A549 (cell line): ENCODE measurements at regions of chr5 and their contacts with region 1.

Region 1: GRCh38 chr5:923281-923873 is 30.7 kb downstream of the TRIP13 start:
- DNase-seq: peak; percentile 80 to 89
- ATAC-seq: peak; percentile 96 to 99
- H3K4me3 ChIP-seq: no peak overlapping the region
- H3K27ac ChIP-seq: peak overlapping the region in 1 of 2 experiments; percentile 65; a peak in 3 of 6 replicates
- H3K4me1 ChIP-seq: peaks cover 13% of the 10 kb centered on the region
- CTCF ChIP-seq: peak; percentile 93
- EP300 ChIP-seq: no peak
- POLR2A ChIP-seq: no peak
- RAD21 ChIP-seq: peak; percentile 95 to 98

Region 2: GRCh38 chr5:912280-913091 is 10.9 kb before region 1 on chr5:
- CTCF ChIA-PET with region 1: interaction called, 33 read pairs
- POLR2A ChIA-PET with region 1: no interaction called
- DNase-seq: peak; percentile 96 to 98
- ATAC-seq: peak; percentile 95 to 96
- H3K4me3 ChIP-seq: 0 out of 3 replicates have a peak overlapping the region, but pooled peaks have one; percentile 2
- H3K27ac ChIP-seq: peak overlapping the region; percentile 60 to 83
- H3K4me1 ChIP-seq: peaks cover 24% of the 10 kb centered on the region
- CTCF ChIP-seq: peak; percentile 47
- EP300 ChIP-seq: peak; percentile 54 to 83; a peak in 3 of 5 replicates
- POLR2A ChIP-seq: no peak
- RAD21 ChIP-seq: peak in 1 of 2 experiments; percentile 27; a peak in 2 of 5 replicates

Region 3: GRCh38 chr5:982377-983237 is 59.2 kb after region 1 on chr5:
- CTCF ChIA-PET with region 1: interaction called, 20 read pairs
- POLR2A ChIA-PET with region 1: no interaction called
- DNase-seq: peak; percentile 38 to 65
- ATAC-seq: peak; percentile 79 to 94
- H3K4me3 ChIP-seq: no peak overlapping the region
- H3K27ac ChIP-seq: peak overlapping the region in 1 of 2 experiments; percentile 51; a peak in 2 of 6 replicates
- H3K4me1 ChIP-seq: no peaks in the 10 kb centered on the region
- CTCF ChIP-seq: peak; percentile 46
- EP300 ChIP-seq: no peak
- POLR2A ChIP-seq: no peak
- RAD21 ChIP-seq: peak; percentile 51 to 52

Region 4: GRCh38 chr5:997001-997474 is 73.7 kb after region 1 on chr5:
- CTCF ChIA-PET with region 1: interaction called, 16 read pairs
- POLR2A ChIA-PET with region 1: no interaction called
- DNase-seq: peak; percentile 36 to 46
- ATAC-seq: peak in 1 of 2 experiments; percentile 77; a peak in 3 of 6 replicates
- H3K4me3 ChIP-seq: no peak overlapping the region
- H3K27ac ChIP-seq: peak overlapping the region in 1 of 2 experiments; percentile 67; a peak in 3 of 6 replicates
- H3K4me1 ChIP-seq: no peaks in the 10 kb centered on the region
- CTCF ChIP-seq: no peak
- EP300 ChIP-seq: no peak
- POLR2A ChIP-seq: no peak
- RAD21 ChIP-seq: no peak

Region 5: DNA sequence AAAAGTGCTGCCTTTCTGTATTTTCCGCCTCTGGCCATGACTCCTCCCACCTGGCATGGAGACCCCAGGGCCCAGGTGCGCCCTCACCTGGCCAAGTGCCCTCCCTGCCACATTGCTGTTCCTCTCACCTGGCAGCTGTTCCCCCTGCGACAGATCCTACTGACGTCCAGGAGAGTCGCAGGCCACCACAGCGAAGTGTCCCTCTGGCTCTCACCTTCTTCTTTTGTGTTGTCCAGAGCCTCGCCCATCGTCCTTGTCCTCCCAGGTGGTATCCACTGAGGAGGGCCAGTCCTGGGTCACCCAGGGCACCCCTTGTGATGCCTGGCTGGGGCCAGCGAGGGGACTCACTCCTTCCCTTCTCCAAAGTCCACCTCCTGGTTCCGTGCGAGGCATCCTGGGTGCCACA is 87.9 kb after region 1 on chr5:
- CTCF ChIA-PET with region 1: interaction called, 82 read pairs
- POLR2A ChIA-PET with region 1: no interaction called
- DNase-seq: peak; percentile 53 to 77
- ATAC-seq: peak; percentile 22 to 56; a peak in 3 of 6 replicates
- H3K4me3 ChIP-seq: no peak overlapping the region
- H3K27ac ChIP-seq: no peak overlapping the region
- H3K4me1 ChIP-seq: peaks cover 24% of the 10 kb centered on the region
- CTCF ChIP-seq: peak; percentile 53
- EP300 ChIP-seq: no peak
- POLR2A ChIP-seq: no peak
- RAD21 ChIP-seq: peak; percentile 26 to 40; a peak in 4 of 5 replicates

Region 6: DNA sequence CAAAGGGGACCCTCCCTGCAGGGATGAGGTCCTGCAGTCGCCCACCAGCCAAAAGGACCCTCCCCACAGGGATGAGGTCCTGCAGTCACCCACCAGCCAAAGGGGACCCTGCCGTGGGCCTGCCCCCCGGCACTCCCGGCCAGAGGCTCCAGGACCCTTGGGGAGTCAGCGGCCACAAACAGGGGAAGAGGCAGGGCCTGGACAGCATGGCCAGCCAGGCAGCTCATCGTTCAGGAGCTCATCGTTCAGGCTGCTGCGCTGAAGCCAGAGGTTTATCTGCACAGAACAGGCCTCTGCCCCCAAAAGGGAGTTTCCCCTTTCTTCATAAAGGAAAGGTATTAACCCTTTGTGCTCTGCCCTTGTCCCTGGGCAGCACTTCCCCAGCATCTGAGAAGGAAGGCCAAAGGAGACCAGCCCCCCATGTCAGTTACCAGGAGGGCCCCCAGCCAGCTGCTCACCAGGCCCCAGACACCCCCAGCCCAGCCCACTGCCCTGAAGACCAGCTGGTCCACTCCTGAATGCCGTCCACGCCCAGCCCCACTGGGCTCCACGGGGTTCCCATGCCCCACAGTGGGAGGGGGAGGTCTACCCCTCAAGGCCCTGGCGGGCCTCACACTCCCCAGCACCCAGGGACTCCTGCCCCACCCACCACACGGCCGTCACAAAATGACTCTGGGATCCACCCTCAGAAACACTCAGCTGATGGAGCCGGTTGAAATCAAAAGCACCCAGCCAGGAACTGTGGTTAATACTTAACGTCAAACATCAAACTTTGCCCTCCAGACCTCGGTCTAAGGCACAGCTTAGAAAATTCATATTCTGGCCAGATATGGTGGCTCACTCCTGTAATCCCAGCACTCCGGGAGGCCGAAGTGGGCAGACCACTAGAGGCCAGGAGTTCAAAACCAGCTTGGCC is 182.2 kb after region 1 on chr5:
- CTCF ChIA-PET with region 1: interaction called, 10 read pairs
- POLR2A ChIA-PET with region 1: no interaction called
- DNase-seq: peak; percentile 71 to 74
- ATAC-seq: peak; percentile 54 to 70
- H3K4me3 ChIP-seq: 0 out of 3 replicates have a peak overlapping the region, but pooled peaks have one; percentile 13
- H3K27ac ChIP-seq: peak overlapping the region; percentile 76 to 87
- H3K4me1 ChIP-seq: peaks cover 62% of the 10 kb centered on the region
- CTCF ChIP-seq: no peak
- EP300 ChIP-seq: no peak
- POLR2A ChIP-seq: no peak
- RAD21 ChIP-seq: no peak

Region 7: GRCh38 chr5:1161833-1162229 is 238.5 kb after region 1 on chr5:
- CTCF ChIA-PET with region 1: interaction called, 70 read pairs
- POLR2A ChIA-PET with region 1: no interaction called
- DNase-seq: no peak
- ATAC-seq: peak in 1 of 2 experiments; percentile 14; a peak in 3 of 6 replicates
- H3K4me3 ChIP-seq: no peak overlapping the region
- H3K27ac ChIP-seq: peak overlapping the region; percentile 28 to 49; a peak in 4 of 6 replicates
- H3K4me1 ChIP-seq: peaks cover 15% of the 10 kb centered on the region; the same call in 2 of the 3 replicates
- CTCF ChIP-seq: no peak
- EP300 ChIP-seq: no peak
- POLR2A ChIP-seq: no peak
- RAD21 ChIP-seq: no peak

Region 8: DNA sequence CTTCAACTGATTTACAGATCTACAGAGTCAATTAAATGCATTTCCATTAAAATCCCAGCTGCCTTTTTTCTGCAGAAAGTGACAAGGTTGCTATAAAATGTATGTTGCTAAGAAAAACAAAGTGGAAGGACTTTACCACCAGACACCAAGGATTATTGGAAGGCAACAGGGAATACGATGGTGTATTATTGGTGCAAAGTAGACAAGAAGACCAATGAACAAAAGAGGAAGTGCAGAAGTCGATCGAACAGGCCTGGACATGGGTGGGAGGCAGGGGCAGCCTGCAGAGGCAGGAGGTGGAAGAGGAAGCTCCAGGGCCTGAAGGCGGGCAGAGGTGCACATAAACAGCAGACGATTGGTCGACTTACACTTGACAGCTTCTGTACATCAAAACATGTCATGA is 267.5 kb after region 1 on chr5:
- CTCF ChIA-PET with region 1: no interaction called
- POLR2A ChIA-PET with region 1: no interaction called
- DNase-seq: no peak
- ATAC-seq: no peak
- H3K4me3 ChIP-seq: no peak overlapping the region
- H3K27ac ChIP-seq: no peak overlapping the region
- H3K4me1 ChIP-seq: no peaks in the 10 kb centered on the region
- CTCF ChIP-seq: no peak
- EP300 ChIP-seq: no peak
- POLR2A ChIP-seq: no peak
- RAD21 ChIP-seq: no peak